ENCODE measurements at regions of chr15 and their contacts with region 1.

Region 1: GRCh38 chr15:57861036-57861638 is 154.6 kb downstream of the POLR2M start:
- DNase-seq: peak; percentile 55
- H3K4me3 ChIP-seq: no peak overlapping the region
- H3K27ac ChIP-seq: no peak overlapping the region
- H3K4me1 ChIP-seq: no peaks in the 10 kb centered on the region
- H3K27me3 ChIP-seq: no peaks in the 10 kb centered on the region
- CTCF ChIP-seq: peak; percentile 76 to 84 (median 83)
- EP300 ChIP-seq: no peak
- POLR2A ChIP-seq: no peak

Region 2: DNA sequence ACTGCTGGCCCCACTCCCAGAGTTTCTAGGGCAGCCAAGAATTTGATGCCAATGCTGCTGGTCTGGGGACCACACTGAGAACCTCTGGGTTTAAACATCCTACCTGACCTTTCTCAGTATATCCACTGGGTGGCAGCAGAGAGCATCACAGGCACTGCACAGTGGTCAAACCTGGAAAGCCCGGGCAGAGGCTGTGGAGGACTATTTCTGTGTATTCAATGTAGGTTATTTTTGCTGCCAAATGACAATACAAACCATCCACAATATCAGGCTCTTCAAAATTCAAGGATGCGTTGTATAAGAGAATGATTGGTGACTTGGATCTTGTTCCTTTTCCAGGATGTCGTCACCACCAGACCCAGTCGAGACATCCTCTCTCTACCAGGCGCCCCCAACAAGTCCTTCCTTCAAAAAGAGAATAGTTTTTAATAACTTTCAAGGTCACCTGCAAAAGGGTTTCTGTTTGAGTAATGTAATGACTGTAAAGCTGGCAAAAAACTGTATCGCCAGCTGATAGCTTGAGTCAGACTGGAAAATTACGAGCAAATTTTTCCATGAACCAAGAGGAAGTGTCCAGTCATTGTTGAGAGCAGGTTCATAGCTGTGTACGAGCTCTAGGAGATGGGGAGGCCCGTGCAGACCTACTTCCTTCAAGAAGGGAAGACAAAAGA is 300.0 kb before region 1 on chr15:
- intact Hi-C with region 1: loop called (anchors 5 kb)
- DNase-seq: no peak
- H3K4me3 ChIP-seq: no peak overlapping the region
- H3K27ac ChIP-seq: peak overlapping the region in 3 of 4 donors; percentile 53 to 63 (median 54)
- H3K4me1 ChIP-seq: peaks cover 16 to 30% (median 21%) of the 10 kb centered on the region in 4 donors
- H3K27me3 ChIP-seq: no peaks in the 10 kb centered on the region
- CTCF ChIP-seq: peak; percentile 90 to 96 (median 95)
- EP300 ChIP-seq: no peak
- POLR2A ChIP-seq: no peak

Region 3: GRCh38 chr15:57667171-57667849 is 193.8 kb before region 1 on chr15:
- intact Hi-C with region 1: loop called (anchors 5 kb)
- DNase-seq: peak; percentile 92
- H3K4me3 ChIP-seq: no peak overlapping the region
- H3K27ac ChIP-seq: peak overlapping the region; percentile 54 to 58 (median 56)
- H3K4me1 ChIP-seq: peaks cover 19 to 40% (median 34%) of the 10 kb centered on the region in 4 donors
- H3K27me3 ChIP-seq: no peaks in the 10 kb centered on the region
- CTCF ChIP-seq: peak; percentile 33 to 48 (median 45)
- EP300 ChIP-seq: no peak
- POLR2A ChIP-seq: no peak

Region 4: GRCh38 chr15:57692709-57693108 is 168.4 kb before region 1 on chr15:
- intact Hi-C with region 1: no loop called
- DNase-seq: no peak
- H3K4me3 ChIP-seq: no peak overlapping the region
- H3K27ac ChIP-seq: no peak overlapping the region
- H3K4me1 ChIP-seq: peaks cover 12 to 32% (median 20%) of the 10 kb centered on the region in 4 donors
- H3K27me3 ChIP-seq: no peaks in the 10 kb centered on the region
- CTCF ChIP-seq: no peak
- EP300 ChIP-seq: no peak
- POLR2A ChIP-seq: no peak

Region 5: DNA sequence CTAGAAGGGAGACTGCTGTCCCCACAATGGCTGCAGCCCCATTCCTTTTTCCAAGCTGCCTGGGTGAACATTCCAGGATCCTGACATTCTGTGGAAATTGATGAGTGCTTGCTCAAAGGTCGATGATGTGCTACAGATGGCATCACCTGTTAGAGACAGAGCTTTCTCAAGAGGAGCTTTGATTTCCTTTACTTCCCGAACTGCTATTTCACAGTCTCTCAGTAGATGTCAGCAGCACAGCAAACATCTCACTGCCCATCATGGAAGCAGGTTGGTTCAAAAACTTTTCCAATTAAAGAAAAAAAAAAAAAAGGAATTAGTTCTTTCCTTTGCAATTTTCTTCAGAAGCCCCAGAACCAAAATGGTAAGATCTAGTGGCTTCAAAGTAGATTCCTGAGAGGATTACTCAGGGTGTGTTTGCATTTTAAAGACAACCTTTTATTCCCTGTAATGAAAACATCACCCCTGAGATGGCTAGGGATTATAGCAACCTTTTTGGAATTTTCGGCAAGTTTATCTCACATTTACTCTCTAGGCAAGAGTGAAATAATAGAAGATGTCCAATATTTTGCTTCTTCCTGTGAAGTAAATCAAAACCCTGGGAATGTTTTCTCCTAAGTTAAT is 109.8 kb before region 1 on chr15:
- intact Hi-C with region 1: loop called (anchors 5 kb)
- DNase-seq: no peak
- H3K4me3 ChIP-seq: no peak overlapping the region
- H3K27ac ChIP-seq: no peak overlapping the region
- H3K4me1 ChIP-seq: peaks cover 0 to 16% (median 14%) of the 10 kb centered on the region in 4 donors
- H3K27me3 ChIP-seq: no peaks in the 10 kb centered on the region
- CTCF ChIP-seq: peak; percentile 38 to 52 (median 39)
- EP300 ChIP-seq: no peak
- POLR2A ChIP-seq: no peak

Measured in esophagus muscularis mucosa (tissue), 4 donors.